Sigmoid colon (tissue), 7 donors: ENCODE measurements at regions of chr12 and their contacts with region 1.

Region 1: DNA sequence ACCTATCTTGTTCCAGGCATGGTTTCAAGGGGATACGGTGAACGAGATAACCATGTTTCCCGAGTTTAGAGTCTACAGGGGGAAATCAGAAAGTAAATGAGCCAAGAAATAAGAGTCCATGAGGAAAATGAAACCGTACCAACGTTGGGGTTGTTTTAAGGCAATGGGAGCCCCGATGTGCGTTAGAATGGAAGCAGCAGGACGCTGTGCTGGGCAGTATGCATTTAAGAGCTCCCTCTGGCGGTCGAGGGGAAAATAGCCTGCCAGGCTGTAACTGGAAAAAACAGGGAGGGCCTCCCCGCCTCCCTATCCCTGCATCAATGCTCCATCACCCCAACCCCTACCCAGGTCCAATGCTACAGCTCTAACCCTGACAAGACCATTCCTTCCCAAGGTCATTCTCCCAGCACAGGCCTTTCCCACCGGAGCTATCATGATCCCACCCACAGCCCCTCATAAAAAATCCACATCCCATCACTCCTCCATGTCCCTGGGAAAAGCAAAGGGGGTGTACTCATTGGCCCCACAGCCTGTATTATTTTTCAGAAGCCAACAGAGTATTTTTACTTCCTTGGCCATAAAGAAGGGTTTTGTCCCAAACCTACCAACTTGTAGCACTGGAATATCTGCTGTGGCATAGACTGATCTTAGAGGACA is 226.3 kb upstream of the NOS1 start:
- DNase-seq: no peak
- H3K4me3 ChIP-seq: no peak overlapping the region
- H3K27ac ChIP-seq: no peak overlapping the region
- H3K4me1 ChIP-seq: peaks cover 0 to 9% (median 4%) of the 10 kb centered on the region in 4 donors
- H3K27me3 ChIP-seq: peaks cover 0 to 5% (median 5%) of the 10 kb centered on the region in 3 donors
- CTCF ChIP-seq: peak in 3 of 4 experiments; percentile 58 to 73 (median 58)
- EP300 ChIP-seq: no peak
- POLR2A ChIP-seq: no peak

Region 2: DNA sequence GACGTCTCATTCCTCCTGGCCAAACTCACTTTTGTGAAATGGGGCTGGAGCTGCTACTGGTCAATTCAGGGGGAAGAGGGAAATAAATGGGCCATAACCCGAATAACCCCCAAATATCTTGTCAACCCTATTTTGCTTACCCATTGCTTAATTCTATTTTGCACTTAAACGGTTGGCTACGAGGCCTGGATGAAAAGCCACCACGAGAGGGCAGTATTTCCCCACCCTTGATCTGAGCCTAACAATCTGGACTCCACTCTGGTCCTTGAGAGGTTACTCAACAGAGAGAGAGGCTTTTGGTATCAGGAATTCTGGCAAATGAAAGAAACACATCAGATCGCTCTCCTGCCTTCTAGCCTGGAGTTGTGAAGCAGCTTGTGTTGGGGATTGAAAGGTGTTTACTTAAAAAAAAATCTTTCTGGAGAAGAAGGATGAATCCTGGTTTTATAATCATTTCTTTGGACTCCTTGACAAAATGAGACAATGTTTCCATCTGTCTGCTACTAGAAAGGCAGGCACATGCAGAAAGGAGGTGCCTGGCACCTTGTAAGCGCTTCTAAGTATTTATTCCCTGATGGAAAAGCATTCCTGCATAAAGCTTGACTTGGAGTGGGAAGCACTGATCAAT is 375.1 kb before region 1 on chr12:
- intact Hi-C with region 1: loop called (anchors 10 kb)
- DNase-seq: peak; percentile 81
- H3K4me3 ChIP-seq: no peak overlapping the region
- H3K27ac ChIP-seq: no peak overlapping the region
- H3K4me1 ChIP-seq: no peaks in the 10 kb centered on the region
- H3K27me3 ChIP-seq: peaks cover 0 to 5% (median 0%) of the 10 kb centered on the region in 3 donors
- CTCF ChIP-seq: peak; percentile 28 to 80 (median 60)
- EP300 ChIP-seq: no peak
- POLR2A ChIP-seq: no peak

Region 3: GRCh38 chr12:117408161-117408791 is 179.5 kb before region 1 on chr12:
- intact Hi-C with region 1: no loop called
- DNase-seq: no peak
- H3K4me3 ChIP-seq: no peak overlapping the region
- H3K27ac ChIP-seq: peak overlapping the region in 1 of 4 donors; percentile 22
- H3K4me1 ChIP-seq: peaks cover 0 to 18% (median 13%) of the 10 kb centered on the region in 4 donors
- H3K27me3 ChIP-seq: no peaks in the 10 kb centered on the region
- CTCF ChIP-seq: no peak
- EP300 ChIP-seq: no peak
- POLR2A ChIP-seq: no peak